CD14-positive monocyte (primary cell): ENCODE measurements at regions of chr19 and their contacts with region 1.

Region 1: GRCh38 chr19:40348125-40348913 is at the starts of genes C19orf47 and PLD3:
- DNase-seq: peak; percentile 99 to 100 (median 99)
- H3K4me3 ChIP-seq: peak within 1 kb of the TSS; percentile 73 to 96 (median 91)
- H3K4me3 Mint-ChIP-seq: peak within 1 kb of the TSS; percentile 88 to 93
- H3K27ac ChIP-seq: peak within 1 kb of the TSS; percentile 64 to 89
- H3K27ac Mint-ChIP-seq: peak within 1 kb of the TSS; percentile 92 to 97 (median 95)
- H3K4me1 ChIP-seq: peaks cover 23 to 24% of the 10 kb centered on the region in 2 donors
- H3K4me1 Mint-ChIP-seq: peaks cover 36% of the 10 kb centered on the region
- H3K27me3 ChIP-seq: no peaks in the 10 kb centered on the region
- H3K27me3 Mint-ChIP-seq: no peaks in the 10 kb centered on the region
- CTCF ChIP-seq: no peak
- polyA plus RNA-seq, gene C19orf47: 7.6 to 10.2 (median 8.0) TPM
- polyA plus RNA-seq, gene PLD3: 168 to 334 (median 170) TPM

Region 2: GRCh38 chr19:40360708-40361241 is 12.5 kb after region 1 on chr19:
- intact Hi-C with region 1: loop called (anchors 1 to 2 kb)
- DNase-seq: peak; percentile 73 to 93 (median 85)
- H3K4me3 ChIP-seq: peak overlapping the region in 1 of 3 experiments; percentile 52
- H3K4me3 Mint-ChIP-seq: peak overlapping the region; percentile 53 to 66
- H3K27ac ChIP-seq: peak overlapping the region; percentile 89 to 90
- H3K27ac Mint-ChIP-seq: peak overlapping the region; percentile 92 to 98 (median 97)
- H3K4me1 ChIP-seq: peaks cover 100% of the 10 kb centered on the region in 2 donors
- H3K4me1 Mint-ChIP-seq: peaks cover 90% of the 10 kb centered on the region
- H3K27me3 ChIP-seq: no peaks in the 10 kb centered on the region
- H3K27me3 Mint-ChIP-seq: peaks cover 0 to 3% (median 3%) of the 10 kb centered on the region in 3 donors
- CTCF ChIP-seq: no peak

Region 3: GRCh38 chr19:40365613-40366401 is 17.5 kb after region 1 on chr19:
- intact Hi-C with region 1: loop called in 1 of 2 experiments (anchors 2 kb)
- DNase-seq: peak; percentile 69 to 84 (median 74)
- H3K4me3 ChIP-seq: peak overlapping the region; percentile 34 to 69 (median 41)
- H3K4me3 Mint-ChIP-seq: peak overlapping the region; percentile 76 to 81
- H3K27ac ChIP-seq: peak overlapping the region; percentile 69 to 72
- H3K27ac Mint-ChIP-seq: peak overlapping the region; percentile 77 to 94 (median 87)
- H3K4me1 ChIP-seq: peaks cover 66 to 70% of the 10 kb centered on the region in 2 donors
- H3K4me1 Mint-ChIP-seq: peaks cover 61% of the 10 kb centered on the region
- H3K27me3 ChIP-seq: no peaks in the 10 kb centered on the region
- H3K27me3 Mint-ChIP-seq: peaks cover 0 to 2% (median 0%) of the 10 kb centered on the region in 3 donors
- CTCF ChIP-seq: no peak

Region 4: GRCh38 chr19:40403262-40403984 is 55.1 kb after region 1 on chr19:
- intact Hi-C with region 1: loop called in 1 of 2 experiments (anchors 5 kb)
- DNase-seq: peak; percentile 71 to 87 (median 81)
- H3K4me3 ChIP-seq: peak overlapping the region; percentile 27 to 82 (median 76)
- H3K4me3 Mint-ChIP-seq: peak overlapping the region; percentile 89 to 99
- H3K27ac ChIP-seq: peak overlapping the region; percentile 48 to 67
- H3K27ac Mint-ChIP-seq: peak overlapping the region; percentile 77 to 97 (median 85)
- H3K4me1 ChIP-seq: peaks cover 23 to 31% of the 10 kb centered on the region in 2 donors
- H3K4me1 Mint-ChIP-seq: peaks cover 27% of the 10 kb centered on the region
- H3K27me3 ChIP-seq: no peaks in the 10 kb centered on the region
- H3K27me3 Mint-ChIP-seq: peaks cover 2 to 12% (median 2%) of the 10 kb centered on the region in 3 donors
- CTCF ChIP-seq: no peak